Motor neuron (in vitro differentiated cells): ENCODE measurements at regions of chr6 and their contacts with region 1.

Region 1: GRCh38 chr6:34196126-34196830 is 40.4 kb upstream of the HMGA1 start:
- ATAC-seq: peak; percentile 94 to 99 (median 98)
- H3K4me3 ChIP-seq: peak overlapping the region in 2 of 5 donors; percentile 9 to 11
- H3K27ac ChIP-seq: no peak overlapping the region
- H3K4me1 ChIP-seq: no peaks in the 10 kb centered on the region

Region 2: DNA sequence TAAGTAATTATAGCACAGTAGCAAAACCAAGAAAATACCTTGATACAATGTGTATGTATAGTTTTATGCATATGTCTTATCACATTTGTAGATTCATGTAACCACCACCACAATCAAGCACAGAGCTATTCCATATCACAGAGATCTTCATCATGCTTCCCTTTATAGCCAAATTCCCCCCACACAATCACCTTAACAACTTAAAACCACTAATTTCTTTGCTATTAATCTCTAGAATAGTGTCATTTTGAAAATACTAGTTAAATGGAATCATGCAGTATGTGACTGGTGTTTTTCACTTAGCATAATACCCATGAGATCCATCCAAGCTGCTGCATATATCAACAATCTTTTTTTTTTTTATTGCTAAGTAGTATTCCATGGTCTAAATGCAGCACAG is 1748.3 kb before region 1 on chr6:
- in situ Hi-C with region 1: no loop called
- ATAC-seq: no peak
- H3K4me3 ChIP-seq: no peak overlapping the region
- H3K27ac ChIP-seq: no peak overlapping the region
- H3K4me1 ChIP-seq: no peaks in the 10 kb centered on the region

Region 3: DNA sequence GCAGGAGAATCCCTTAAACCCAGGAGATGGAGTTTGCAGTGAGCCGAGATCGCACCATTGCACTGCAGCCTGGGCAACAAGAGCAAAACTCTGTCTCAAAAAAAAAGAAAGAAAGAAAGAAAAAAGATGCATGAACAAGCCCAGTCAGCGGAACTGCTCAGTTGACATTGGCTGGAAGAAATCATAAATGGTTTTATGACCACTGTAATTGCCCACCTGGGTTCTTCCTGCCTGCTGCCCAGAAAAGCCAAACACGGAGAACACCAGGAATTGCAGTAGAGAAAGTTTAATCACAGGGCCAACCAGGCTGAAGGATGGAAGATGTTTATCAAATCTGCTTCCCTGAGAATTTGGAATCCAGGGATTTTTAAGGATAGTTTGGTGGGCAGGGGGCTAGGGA is 638.9 kb before region 1 on chr6:
- in situ Hi-C with region 1: no loop called
- ATAC-seq: no peak
- H3K4me3 ChIP-seq: no peak overlapping the region
- H3K27ac ChIP-seq: no peak overlapping the region
- H3K4me1 ChIP-seq: no peaks in the 10 kb centered on the region

Region 4: DNA sequence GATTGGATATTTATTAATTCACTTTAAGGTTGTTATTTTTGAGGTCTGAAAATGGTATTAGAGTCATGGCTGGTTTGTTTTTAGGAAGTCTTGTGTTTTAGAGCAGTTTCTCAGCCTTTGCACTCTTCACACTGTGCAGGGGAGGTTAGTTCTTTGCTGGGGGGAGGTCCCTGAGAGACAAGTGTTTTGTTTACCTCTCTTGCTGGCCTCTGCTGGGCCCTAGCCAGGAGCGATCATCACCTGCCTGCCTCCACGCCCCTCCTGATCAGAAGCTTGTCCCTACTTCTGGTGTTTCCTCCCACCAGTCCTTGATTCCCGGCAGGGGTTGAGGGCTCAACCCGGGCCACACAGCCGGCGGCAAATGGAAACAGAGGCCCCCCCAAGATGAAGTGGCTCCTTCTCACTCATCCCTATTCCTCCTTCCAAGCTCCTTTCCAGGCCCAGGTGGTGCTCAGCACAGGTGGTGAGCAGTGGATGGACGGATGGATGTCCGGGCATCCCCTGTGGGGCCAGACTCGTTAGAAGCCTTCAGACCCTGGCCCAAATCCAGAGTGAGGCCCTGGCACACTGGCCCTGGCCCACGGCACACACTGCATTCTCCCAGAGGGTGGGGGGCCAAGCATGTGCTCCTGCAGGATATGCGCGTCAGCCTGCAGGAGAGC is 101.7 kb before region 1 on chr6:
- in situ Hi-C with region 1: no loop called
- ATAC-seq: no peak
- H3K4me3 ChIP-seq: no peak overlapping the region
- H3K27ac ChIP-seq: no peak overlapping the region
- H3K4me1 ChIP-seq: peaks cover 11 to 12% of the 10 kb centered on the region in 2 donors

Region 5: GRCh38 chr6:34610819-34611477 is 414.7 kb after region 1 on chr6:
- in situ Hi-C with region 1: loop called in 4 of 9 experiments (anchors 25 kb)
- ATAC-seq: peak in 4 of 8 experiments; percentile 29 to 71 (median 58)
- H3K4me3 ChIP-seq: no peak overlapping the region
- H3K27ac ChIP-seq: no peak overlapping the region
- H3K4me1 ChIP-seq: no peaks in the 10 kb centered on the region